Mammary epithelial cell (primary cell): ENCODE measurements at regions of chr12 and their contacts with region 1.

Region 1: GRCh38 chr12:49366652-49367380 is 446 bp upstream of the SPATS2 start:
- DNase-seq: peak; percentile 94
- H3K4me3 ChIP-seq: peak overlapping the region; percentile 65 to 73 (median 72)
- H3K27ac ChIP-seq: peak overlapping the region; percentile 77
- H3K4me1 ChIP-seq: peaks cover 28% of the 10 kb centered on the region
- H3K27me3 ChIP-seq: no peaks in the 10 kb centered on the region
- CTCF ChIP-seq: peak in 1 of 2 donors; percentile 28

Region 2: GRCh38 chr12:49264738-49265515 is 101.9 kb before region 1 on chr12 and contains the start of gene TUBA1C:
- CTCF ChIA-PET with region 1: no interaction called
- dilution Hi-C with region 1: loop called (anchors 5 kb)
- in situ Hi-C with region 1: no loop called
- intact Hi-C with region 1: no loop called
- DNase-seq: peak; percentile 95
- H3K4me3 ChIP-seq: peak within 1 kb of the TSS; percentile 75 to 99 (median 89)
- H3K27ac ChIP-seq: peak within 1 kb of the TSS; percentile 94
- H3K4me1 ChIP-seq: peaks cover 46% of the 10 kb centered on the region
- H3K27me3 ChIP-seq: no peaks in the 10 kb centered on the region
- CTCF ChIP-seq: no peak
- total RNA-seq, gene TUBA1C: 455 to 532 TPM

Region 3: DNA sequence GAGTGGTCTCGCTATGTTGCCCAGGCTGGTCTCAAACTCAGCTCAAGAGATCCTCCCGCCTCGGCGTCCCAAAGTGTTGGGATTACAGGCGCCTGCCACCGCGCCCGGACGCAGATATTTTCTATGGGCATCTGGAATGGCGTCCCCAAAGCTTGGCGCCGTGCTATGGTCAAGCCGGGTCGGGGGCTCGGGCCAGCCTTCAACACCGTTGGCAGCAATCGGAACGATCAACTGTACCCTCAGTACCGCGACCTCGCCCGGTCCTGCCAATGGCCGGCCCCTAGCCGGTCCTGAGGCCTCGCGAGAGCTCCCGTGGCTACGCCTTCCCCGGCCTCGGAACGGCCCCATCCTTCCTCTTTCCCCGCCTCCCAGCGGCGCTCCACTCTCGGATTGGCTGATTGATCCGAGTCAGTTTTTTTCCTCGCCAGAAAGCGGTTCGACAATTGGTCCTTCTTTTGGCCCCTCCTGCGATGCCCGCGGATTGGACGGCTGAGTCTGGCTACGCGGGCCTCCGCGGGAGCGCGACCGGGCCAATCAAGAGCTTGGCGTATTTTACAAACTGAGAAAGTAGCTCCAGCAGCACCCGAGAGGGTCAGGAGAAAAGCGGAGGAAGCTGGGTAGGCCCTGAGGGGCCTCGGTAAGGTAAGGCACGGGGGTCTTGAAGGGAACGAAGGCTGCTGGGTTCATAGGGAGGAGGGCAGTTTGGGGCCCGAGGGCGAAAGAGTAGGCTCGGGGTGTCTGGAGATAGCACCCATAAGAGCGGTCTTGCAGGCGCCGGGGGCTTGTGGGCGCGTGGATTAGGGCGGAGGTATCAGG is 43.9 kb before region 1 on chr12 and contains the start of gene TROAP:
- CTCF ChIA-PET with region 1: no interaction called
- dilution Hi-C with region 1: loop called (anchors 5 kb)
- in situ Hi-C with region 1: no loop called
- intact Hi-C with region 1: no loop called
- DNase-seq: peak; percentile 99
- H3K4me3 ChIP-seq: peak within 1 kb of the TSS; percentile 77 to 81 (median 78)
- H3K27ac ChIP-seq: peak within 1 kb of the TSS; percentile 64
- H3K4me1 ChIP-seq: peaks cover 14% of the 10 kb centered on the region
- H3K27me3 ChIP-seq: no peaks in the 10 kb centered on the region
- CTCF ChIP-seq: no peak
- total RNA-seq, gene TROAP: 0.33 to 34.2 TPM

Region 4: DNA sequence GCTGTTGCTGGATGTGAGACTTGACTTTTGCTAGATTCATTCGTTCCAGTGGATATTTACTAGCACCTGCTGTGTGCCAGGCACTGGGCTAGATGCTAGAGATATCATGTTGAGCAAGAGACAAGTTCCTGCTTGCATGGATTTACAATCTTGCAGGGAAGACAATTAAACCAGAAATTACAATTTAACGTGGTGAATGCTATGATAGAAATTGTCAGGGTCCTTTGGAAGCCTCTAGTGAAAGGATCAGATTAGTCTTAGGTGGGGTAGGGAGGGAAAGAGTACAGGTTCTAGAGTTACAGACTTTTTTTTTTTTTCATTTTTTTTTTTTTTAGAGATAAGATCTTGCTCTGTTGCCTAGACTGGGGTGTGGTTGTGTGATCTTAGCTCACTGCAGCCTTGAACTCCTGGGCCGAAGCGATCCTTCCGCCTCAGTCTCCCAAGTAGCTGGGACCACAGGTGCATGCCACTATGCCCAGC is 37.2 kb after region 1 on chr12:
- CTCF ChIA-PET with region 1: no interaction called
- dilution Hi-C with region 1: no loop called
- in situ Hi-C with region 1: no loop called
- intact Hi-C with region 1: loop called (anchors 5 kb)
- DNase-seq: peak; percentile 37
- H3K4me3 ChIP-seq: no peak overlapping the region
- H3K27ac ChIP-seq: no peak overlapping the region
- H3K4me1 ChIP-seq: peaks cover 5% of the 10 kb centered on the region
- H3K27me3 ChIP-seq: no peaks in the 10 kb centered on the region
- CTCF ChIP-seq: no peak

Region 5: DNA sequence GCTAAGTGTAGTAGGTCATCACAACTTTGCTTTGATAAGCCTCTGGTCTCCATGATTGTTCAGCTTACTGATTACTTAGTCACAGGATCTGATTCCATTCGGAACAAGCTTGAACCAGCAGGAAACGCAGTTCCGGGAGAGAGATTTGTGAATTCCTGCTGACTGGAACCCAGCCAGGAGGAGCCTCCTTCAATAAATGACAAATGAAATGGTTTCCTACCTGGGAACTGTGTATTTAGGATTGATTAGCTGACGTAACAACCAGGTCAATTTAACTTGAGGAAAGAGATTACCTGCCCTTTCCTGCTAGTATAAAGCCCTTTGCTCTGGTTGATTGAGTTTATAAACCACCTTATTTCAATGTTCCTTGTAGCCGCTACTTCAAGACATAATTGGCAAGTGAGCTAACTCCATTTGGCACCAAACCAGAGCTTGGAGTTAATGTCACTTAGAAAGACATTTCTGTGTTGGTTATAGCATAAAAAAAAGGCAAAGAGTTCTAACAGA is 136.9 kb after region 1 on chr12:
- CTCF ChIA-PET with region 1: interaction called, 4 read pairs
- dilution Hi-C with region 1: no loop called
- in situ Hi-C with region 1: loop called (anchors 5 kb)
- intact Hi-C with region 1: no loop called
- DNase-seq: peak; percentile 92
- H3K4me3 ChIP-seq: no peak overlapping the region
- H3K27ac ChIP-seq: peak overlapping the region; percentile 82
- H3K4me1 ChIP-seq: peaks cover 35% of the 10 kb centered on the region
- H3K27me3 ChIP-seq: no peaks in the 10 kb centered on the region
- CTCF ChIP-seq: no peak

Region 6: GRCh38 chr12:49623142-49623904 is 256.5 kb after region 1 on chr12 and contains the start of gene PRPF40B:
- CTCF ChIA-PET with region 1: no interaction called
- dilution Hi-C with region 1: no loop called
- in situ Hi-C with region 1: no loop called
- intact Hi-C with region 1: loop called (anchors 5 kb)
- DNase-seq: peak; percentile 79
- H3K4me3 ChIP-seq: peak within 1 kb of the TSS; percentile 57 to 74 (median 58)
- H3K27ac ChIP-seq: peak within 1 kb of the TSS; percentile 72
- H3K4me1 ChIP-seq: peaks cover 68% of the 10 kb centered on the region
- H3K27me3 ChIP-seq: no peaks in the 10 kb centered on the region
- CTCF ChIP-seq: peak in 1 of 2 donors; percentile 49
- total RNA-seq, gene PRPF40B: 8.0 to 34.4 TPM